ENCODE measurements at regions of chr2 and their contacts with region 1.

Region 1: DNA sequence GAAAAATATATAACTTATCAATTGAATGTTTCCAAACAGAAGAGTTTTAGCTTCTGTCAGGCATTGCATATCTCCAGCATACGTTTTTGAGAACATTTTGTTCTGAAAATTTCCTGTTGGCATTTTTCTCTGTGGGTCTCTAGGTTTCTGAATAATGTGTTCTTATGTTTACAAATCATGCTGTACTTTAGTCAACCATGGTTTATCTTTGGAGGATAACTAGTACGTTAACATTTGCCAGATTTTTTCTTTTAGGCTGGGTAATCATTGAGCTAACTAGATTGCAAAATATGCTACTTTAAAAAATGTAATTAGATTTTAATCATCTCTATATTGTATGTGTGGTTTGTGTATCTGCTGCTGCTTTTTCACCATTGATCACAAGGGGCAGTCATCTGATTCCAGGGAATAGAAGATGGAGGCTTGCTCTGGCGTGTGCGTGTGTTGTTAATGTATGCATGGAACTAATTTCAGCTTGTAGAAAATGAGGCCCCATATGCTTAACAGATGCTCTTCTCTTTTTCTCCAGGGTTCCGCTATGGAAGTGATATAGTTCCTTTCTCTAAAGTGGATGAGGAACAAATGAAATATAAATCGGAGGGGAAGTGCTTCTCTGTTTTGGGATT is 21.3 kb downstream of the XRCC5 start:
- DNase-seq: no peak
- H3K4me3 ChIP-seq: no peak overlapping the region
- CTCF ChIP-seq: no peak

Region 2: GRCh38 chr2:216114714-216115557 is 15.5 kb before region 1 on chr2:
- CTCF ChIA-PET with region 1: interaction called, 64 read pairs
- POLR2A ChIA-PET with region 1: interaction called, 3 read pairs
- DNase-seq: peak; percentile 91
- H3K4me3 ChIP-seq: peak overlapping the region; percentile 54
- CTCF ChIP-seq: peak; percentile 75

Region 3: GRCh38 chr2:216777650-216778273 is 647.3 kb after region 1 on chr2:
- CTCF ChIA-PET with region 1: no interaction called
- POLR2A ChIA-PET with region 1: no interaction called
- DNase-seq: no peak
- H3K4me3 ChIP-seq: no peak overlapping the region
- CTCF ChIP-seq: peak; percentile 56